ENCODE measurements at regions of chr1 and their contacts with region 1.

Region 1: DNA sequence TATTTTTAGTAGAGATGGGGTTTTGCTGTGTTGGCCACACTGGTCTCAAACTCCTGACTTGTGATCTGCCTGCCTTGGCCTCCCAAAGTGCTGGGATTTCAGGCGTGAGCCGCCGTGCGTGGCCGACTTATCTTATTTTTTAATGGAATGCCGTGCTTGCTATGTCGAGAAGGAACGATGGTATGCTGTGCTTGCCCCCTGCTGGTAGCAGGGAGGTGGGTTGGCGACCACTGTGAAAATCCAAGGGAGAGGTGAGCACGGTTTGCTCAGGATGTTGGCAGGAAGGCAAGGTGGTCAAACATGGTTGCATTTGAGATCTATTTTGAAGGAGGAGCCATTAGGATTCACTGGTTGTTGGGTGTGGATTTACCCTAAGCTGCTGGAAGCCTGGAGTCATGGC is 45.8 kb upstream of the RCC2 start:
- DNase-seq: no peak
- ATAC-seq: no peak

Region 2: DNA sequence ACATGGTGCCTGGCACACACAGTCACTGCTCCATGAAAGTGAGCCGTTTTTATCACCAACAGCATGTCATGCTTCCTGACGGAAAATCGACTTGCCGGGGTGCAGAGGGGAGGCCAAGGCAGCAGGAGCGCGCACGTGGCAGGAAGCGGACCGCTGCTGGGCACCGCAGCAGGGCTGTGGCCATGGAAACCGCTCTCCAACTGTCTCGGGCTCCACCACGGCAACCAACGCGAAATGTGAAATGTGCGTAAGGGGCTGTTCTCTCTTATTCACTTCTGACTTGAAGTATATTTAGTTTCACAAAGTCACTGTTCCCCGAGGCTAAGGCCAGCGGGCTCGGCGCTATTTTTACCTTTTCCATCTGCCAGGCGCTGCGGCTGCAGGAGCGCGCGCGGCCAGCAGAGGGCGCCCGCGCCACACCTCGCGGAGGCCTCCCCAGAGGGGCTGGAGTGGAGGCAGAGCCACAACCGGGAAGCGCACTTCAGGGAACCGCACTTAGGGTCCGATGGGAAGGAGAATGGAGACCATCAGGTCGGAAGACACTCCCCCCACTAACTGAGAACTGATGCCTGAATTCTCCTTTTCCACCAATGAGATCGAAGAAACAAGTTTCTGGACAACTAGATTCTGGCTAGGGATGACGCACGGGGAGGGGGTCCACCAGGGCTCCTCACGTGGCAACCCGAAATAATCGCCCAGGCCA is 65.5 kb before region 1 on chr1:
- intact Hi-C with region 1: loop called (anchors 5 kb)
- DNase-seq: peak; percentile 84
- ATAC-seq: peak; percentile 88

Measured in Right ventricle myocardium superior (tissue), 1 donor.